ENCODE measurements at regions of chr20 and their contacts with region 1.

Region 1: DNA sequence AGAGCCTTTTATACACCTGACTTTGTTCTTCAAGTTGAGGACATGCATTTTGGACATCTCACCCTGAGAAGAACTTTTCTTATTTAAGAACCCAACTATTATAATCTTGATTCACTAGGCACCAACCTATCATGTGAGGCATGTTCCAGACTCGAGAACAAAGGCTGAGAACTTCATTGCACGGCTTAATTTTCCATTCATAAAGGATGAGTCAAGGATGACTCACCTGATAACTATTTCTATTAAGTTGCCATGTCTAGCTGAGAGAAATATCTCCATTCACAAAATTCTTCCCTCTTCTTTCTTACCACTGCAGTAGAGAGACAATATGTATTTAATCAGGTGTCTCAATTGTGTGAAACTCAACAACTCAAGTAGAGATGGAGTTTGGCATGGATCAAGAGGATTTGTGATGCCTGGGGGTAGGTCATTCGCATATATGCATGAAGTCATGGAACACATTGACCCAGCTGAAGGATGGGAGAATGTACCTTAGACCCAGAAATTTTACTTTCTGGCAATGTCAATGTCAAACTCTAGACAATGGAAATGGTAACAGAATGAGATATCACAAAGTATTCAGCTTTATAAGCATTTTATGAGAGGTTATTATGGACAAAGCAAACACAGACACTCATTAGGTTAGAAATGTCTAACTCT is 208.7 kb upstream of the PRND start:
- DNase-seq: peak; percentile 91
- H3K4me3 ChIP-seq: no peak overlapping the region
- H3K27ac ChIP-seq: peak overlapping the region; percentile 95
- H3K4me1 ChIP-seq: peaks cover 37% of the 10 kb centered on the region
- H3K27me3 ChIP-seq: no peaks in the 10 kb centered on the region
- CTCF ChIP-seq: no peak

Region 2: GRCh38 chr20:4444404-4444803 is 68.6 kb before region 1 on chr20:
- CTCF ChIA-PET with region 1: no interaction called
- dilution Hi-C with region 1: no loop called
- in situ Hi-C with region 1: no loop called
- intact Hi-C with region 1: loop called (anchors 2 kb)
- DNase-seq: peak; percentile 92
- H3K4me3 ChIP-seq: no peak overlapping the region
- H3K27ac ChIP-seq: peak overlapping the region; percentile 66
- H3K4me1 ChIP-seq: peaks cover 37% of the 10 kb centered on the region
- H3K27me3 ChIP-seq: no peaks in the 10 kb centered on the region
- CTCF ChIP-seq: no peak

Region 3: DNA sequence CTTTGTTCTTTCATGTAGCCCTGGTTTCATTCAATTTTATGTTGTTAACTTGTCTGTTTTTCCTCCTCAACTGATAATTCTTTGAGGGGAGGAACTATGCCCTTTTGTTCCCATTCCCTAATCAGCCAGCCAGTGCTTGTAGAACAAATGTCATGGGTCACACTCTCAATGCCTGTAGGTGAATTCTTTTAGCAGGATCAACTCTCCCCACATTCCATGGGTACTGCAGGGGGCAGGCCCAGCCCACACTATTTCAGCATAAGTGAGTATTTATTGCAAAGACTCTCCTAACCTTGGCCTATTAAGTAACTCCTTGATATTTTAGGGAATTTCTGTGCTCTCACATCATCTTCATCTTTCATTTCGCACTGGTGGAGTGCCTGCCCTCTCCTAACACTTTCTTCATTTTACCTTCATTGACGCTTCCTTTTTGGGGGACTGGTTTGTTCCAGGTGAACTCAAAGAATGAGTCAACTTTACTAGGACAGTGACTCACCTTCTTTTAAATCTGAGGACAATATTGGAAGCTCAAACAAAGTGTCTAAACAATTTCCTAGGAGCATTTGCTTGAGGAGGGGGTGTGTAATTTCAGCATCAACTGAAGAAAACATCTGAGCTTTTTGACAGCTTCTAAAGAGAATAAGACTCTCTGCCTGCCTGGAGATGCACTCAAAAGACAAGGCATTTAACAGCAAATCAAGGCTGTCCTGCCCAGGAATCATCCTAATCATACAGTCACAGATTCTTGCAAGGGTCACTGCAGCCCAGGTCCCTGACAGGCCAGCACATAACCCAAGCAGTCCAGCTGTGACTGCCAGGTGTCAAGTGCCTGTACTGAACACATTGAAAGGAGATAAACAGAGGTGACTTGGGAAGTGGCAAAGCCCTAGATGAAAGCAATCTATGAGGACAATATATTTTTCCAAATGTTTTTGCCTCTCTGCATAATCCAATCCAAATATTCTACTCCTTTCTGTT is 55.2 kb before region 1 on chr20:
- CTCF ChIA-PET with region 1: no interaction called
- dilution Hi-C with region 1: no loop called
- in situ Hi-C with region 1: no loop called
- intact Hi-C with region 1: loop called (anchors 5 kb)
- DNase-seq: peak; percentile 71
- H3K4me3 ChIP-seq: no peak overlapping the region
- H3K27ac ChIP-seq: peak overlapping the region; percentile 42
- H3K4me1 ChIP-seq: peaks cover 40% of the 10 kb centered on the region
- H3K27me3 ChIP-seq: no peaks in the 10 kb centered on the region
- CTCF ChIP-seq: no peak

Measured in mammary epithelial cell (primary cell).